ENCODE measurements at regions of chr1 and their contacts with region 1.

Region 1: DNA sequence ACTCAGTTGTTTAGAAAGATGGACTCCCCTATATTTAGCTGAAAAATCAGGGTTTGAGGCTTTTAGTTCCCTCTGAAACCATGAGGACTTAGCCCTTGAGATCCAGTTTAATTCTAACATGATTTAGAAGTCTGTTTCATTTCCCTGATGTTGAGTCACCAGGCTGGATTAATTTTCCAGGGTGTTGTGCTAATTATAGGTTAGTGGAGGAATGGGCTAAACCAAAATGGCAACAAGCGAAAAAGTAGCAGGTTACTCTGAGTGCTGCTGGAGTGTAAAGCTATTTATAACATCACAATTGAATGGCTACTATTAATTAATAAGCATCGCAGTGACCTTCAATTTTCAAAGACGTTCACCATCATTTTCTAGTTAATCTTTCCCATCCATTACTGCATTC is 15.5 kb upstream of the USP24 start:
- DNase-seq: no peak
- H3K4me3 ChIP-seq: no peak overlapping the region
- H3K27ac ChIP-seq: no peak overlapping the region
- H3K4me1 ChIP-seq: peaks cover 4% of the 10 kb centered on the region
- H3K27me3 ChIP-seq: no peaks in the 10 kb centered on the region
- CTCF ChIP-seq: no peak

Region 2: DNA sequence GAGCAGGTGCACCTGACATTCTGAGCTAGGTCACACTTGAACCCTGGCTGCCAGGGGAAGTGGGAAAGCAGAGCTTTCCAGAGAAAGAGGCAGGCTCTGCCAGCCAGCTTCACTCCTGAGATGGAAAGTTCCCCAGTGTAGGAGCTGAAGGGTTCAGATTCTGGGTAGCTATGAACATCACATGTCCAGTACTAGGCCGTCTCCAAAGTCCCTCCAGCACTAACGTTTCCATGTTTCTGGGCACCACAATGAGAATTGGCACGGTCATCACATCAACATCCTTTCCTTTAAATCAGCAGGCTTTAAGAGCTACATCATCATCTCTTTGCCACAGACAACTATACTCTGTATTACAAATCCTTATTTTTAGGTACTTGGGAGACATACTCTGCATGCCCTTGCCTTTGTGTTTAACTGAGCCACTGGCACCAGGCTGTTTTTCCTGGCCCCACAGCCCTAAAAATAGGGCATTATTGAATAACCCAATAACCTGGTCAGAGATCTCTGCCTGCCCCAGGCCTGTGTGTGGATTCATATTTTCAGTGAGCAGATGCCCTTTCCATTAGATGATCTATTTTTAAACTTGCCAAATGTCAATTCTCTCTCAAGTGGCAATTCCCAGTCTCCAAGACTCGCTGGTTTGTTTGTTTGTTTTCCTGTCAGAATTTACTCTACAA is 19.9 kb after region 1 on chr1:
- CTCF ChIA-PET with region 1: no interaction called
- dilution Hi-C with region 1: no loop called
- in situ Hi-C with region 1: no loop called
- intact Hi-C with region 1: loop called (anchors 2 kb)
- DNase-seq: no peak
- H3K4me3 ChIP-seq: no peak overlapping the region
- H3K27ac ChIP-seq: no peak overlapping the region
- H3K4me1 ChIP-seq: peaks cover under 1% of the 10 kb centered on the region
- H3K27me3 ChIP-seq: no peaks in the 10 kb centered on the region
- CTCF ChIP-seq: no peak

Measured in mammary epithelial cell (primary cell).